ENCODE measurements at regions of chr11 and their contacts with region 1.

Region 1: DNA sequence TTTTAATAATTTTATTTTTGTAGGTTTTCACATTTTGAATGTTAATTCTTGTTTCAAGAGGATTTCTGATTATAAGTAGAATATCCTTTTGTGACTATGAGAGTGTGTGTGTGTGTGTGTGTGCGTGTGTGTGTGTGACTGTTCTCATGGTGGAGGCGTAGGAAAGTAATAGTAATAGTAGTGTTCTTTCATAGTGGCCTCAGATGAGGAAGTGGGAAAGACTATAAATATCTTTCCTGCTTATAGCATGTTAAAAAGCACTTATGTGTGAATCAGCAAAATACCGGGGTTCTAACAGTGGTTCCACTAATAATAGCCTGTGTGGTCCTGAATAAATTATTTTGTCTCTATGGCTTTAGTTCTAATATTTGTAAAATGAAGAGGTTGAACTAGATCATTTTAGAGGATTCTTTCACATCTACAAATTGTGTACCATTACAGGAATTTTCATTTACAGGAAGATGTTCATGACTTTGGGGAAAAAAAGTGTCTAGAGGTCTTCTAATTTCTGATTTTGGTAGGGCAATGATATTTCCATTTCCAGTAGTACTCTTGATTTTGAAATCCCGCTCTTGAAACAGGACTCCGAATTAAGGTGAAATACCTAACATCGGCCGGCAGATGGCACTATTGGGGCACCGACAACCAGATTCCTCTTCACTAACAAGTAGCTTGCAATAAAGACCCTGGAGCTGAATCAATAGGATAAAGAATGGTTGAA is 29.9 kb upstream of the OR10G7 start:
- DNase-seq: peak; percentile 74 to 77
- H3K4me3 ChIP-seq: no peak overlapping the region
- H3K27ac ChIP-seq: no peak overlapping the region
- H3K4me1 ChIP-seq: peaks cover 0 to 3% (median 2%) of the 10 kb centered on the region in 4 experiments; a peak in 3 of 7 replicates
- H3K27me3 ChIP-seq: no peaks in the 10 kb centered on the region
- CTCF ChIP-seq: peak; percentile 35 to 72 (median 65)
- EP300 ChIP-seq: no peak
- POLR2A ChIP-seq: no peak
- RAD21 ChIP-seq: peak; percentile 80 to 85

Region 2: DNA sequence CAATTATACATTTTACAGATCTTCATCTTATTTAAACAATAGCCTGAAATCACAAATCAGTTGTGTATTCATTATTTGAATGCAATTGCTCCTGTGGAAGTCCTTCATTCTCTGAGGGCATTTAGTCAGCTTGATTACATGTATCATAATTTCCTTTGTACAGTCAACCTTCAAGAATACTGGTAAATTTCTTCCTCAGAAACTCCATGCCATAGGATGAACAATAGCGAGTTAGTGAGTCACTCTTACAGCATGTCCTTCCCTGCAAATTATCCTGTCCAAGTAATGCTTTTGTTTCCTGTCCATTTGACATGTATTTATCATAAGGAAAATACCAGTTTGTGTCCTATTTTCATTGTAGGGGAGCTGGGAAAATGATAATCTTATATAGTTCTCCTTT is 97.3 kb before region 1 on chr11:
- CTCF ChIA-PET with region 1: no interaction called
- POLR2A ChIA-PET with region 1: no interaction called
- DNase-seq: no peak
- H3K4me3 ChIP-seq: no peak overlapping the region
- H3K27ac ChIP-seq: no peak overlapping the region
- H3K4me1 ChIP-seq: no peaks in the 10 kb centered on the region
- H3K27me3 ChIP-seq: no peaks in the 10 kb centered on the region
- CTCF ChIP-seq: no peak
- EP300 ChIP-seq: no peak
- POLR2A ChIP-seq: no peak
- RAD21 ChIP-seq: no peak

Region 3: GRCh38 chr11:124114942-124115781 is 44.1 kb after region 1 on chr11 and contains the start of gene VWA5A:
- CTCF ChIA-PET with region 1: interaction called, 13 read pairs
- POLR2A ChIA-PET with region 1: interaction called, 4 read pairs
- DNase-seq: peak; percentile 57 to 70
- H3K4me3 ChIP-seq: peak within 1 kb of the TSS; percentile 55 to 70 (median 63)
- H3K27ac ChIP-seq: no peak within 1 kb of the TSS
- H3K4me1 ChIP-seq: peaks cover 0 to 8% (median 4%) of the 10 kb centered on the region in 4 experiments; a peak in 4 of 7 replicates
- H3K27me3 ChIP-seq: no peaks in the 10 kb centered on the region
- CTCF ChIP-seq: no peak
- EP300 ChIP-seq: no peak
- POLR2A ChIP-seq: peak; percentile 48 to 81
- RAD21 ChIP-seq: peak in 1 of 2 experiments; percentile 15; a peak in 1 of 4 replicates
- total RNA-seq, gene VWA5A: 18.8 and 20.4 TPM in 2 replicates

Region 4: DNA sequence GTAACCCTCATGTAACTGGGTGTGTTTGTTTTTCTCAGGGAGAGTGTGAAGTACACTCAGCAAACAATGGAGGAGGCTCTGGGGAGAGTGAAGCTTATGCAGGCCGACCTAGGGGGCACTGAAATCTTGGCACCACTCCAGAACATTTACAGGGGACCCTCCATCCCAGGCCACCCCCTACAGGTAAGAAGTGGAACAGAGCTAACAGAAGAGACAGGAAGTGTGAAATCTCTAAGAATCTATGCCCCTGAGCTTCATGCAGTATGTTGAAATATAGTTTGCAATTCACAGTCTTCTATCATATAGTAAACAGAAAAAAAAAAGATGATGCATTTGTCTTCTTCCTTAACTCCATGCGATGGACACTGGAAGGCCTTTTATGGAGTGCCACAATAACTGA is 52.5 kb after region 1 on chr11:
- CTCF ChIA-PET with region 1: interaction called, 13 read pairs
- POLR2A ChIA-PET with region 1: no interaction called
- DNase-seq: no peak
- H3K4me3 ChIP-seq: no peak overlapping the region
- H3K27ac ChIP-seq: no peak overlapping the region
- H3K4me1 ChIP-seq: no peaks in the 10 kb centered on the region
- H3K27me3 ChIP-seq: no peaks in the 10 kb centered on the region
- CTCF ChIP-seq: peak; percentile 20 to 61 (median 60)
- EP300 ChIP-seq: no peak
- POLR2A ChIP-seq: no peak
- RAD21 ChIP-seq: peak; percentile 47 to 55

Region 5: GRCh38 chr11:124194698-124195410 is 123.8 kb after region 1 on chr11:
- CTCF ChIA-PET with region 1: interaction called, 39 read pairs
- POLR2A ChIA-PET with region 1: no interaction called
- DNase-seq: peak in 1 of 2 experiments; percentile 67
- H3K4me3 ChIP-seq: no peak overlapping the region
- H3K27ac ChIP-seq: no peak overlapping the region
- H3K4me1 ChIP-seq: peaks cover 0 to 3% (median 0%) of the 10 kb centered on the region in 4 experiments; a peak in 1 of 7 replicates
- H3K27me3 ChIP-seq: peaks cover 1 to 15% (median 11%) of the 10 kb centered on the region in 4 experiments; a peak in 5 of 7 replicates
- CTCF ChIP-seq: peak; percentile 59 to 91 (median 74)
- EP300 ChIP-seq: no peak
- POLR2A ChIP-seq: no peak
- RAD21 ChIP-seq: peak; percentile 76 to 84

Region 6: DNA sequence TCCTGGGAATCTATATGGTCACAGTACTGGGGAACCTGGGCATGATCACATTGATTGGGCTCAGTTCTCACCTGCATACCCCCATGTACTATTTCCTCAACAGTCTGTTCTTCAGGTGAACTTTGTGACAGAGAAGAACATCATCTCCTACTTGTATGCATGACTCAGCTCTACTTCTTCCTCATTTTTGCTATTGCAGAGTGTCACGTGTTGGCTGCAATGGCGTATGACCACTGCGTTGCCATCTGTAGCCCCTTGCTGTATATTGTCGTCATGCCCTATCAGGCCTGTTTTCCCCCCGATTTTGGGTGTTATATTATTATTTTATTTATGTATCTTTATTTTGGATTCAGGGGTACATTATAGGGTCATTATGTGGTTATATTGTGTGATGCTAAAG is 167.4 kb after region 1 on chr11:
- CTCF ChIA-PET with region 1: no interaction called
- POLR2A ChIA-PET with region 1: no interaction called
- DNase-seq: no peak
- H3K4me3 ChIP-seq: no peak overlapping the region
- H3K27ac ChIP-seq: no peak overlapping the region
- H3K4me1 ChIP-seq: no peaks in the 10 kb centered on the region
- H3K27me3 ChIP-seq: no peaks in the 10 kb centered on the region
- CTCF ChIP-seq: no peak
- EP300 ChIP-seq: no peak
- POLR2A ChIP-seq: no peak
- RAD21 ChIP-seq: no peak

Region 7: GRCh38 chr11:124277804-124278203 is 206.7 kb after region 1 on chr11:
- CTCF ChIA-PET with region 1: interaction called, 13 read pairs
- POLR2A ChIA-PET with region 1: no interaction called
- DNase-seq: peak in 1 of 2 experiments; percentile 48
- H3K4me3 ChIP-seq: no peak overlapping the region
- H3K27ac ChIP-seq: no peak overlapping the region
- H3K4me1 ChIP-seq: peaks cover 0 to 3% (median 0%) of the 10 kb centered on the region in 4 experiments; a peak in 1 of 7 replicates
- H3K27me3 ChIP-seq: no peaks in the 10 kb centered on the region
- CTCF ChIP-seq: peak in 2 of 3 experiments; percentile 49 to 57; a peak in 3 of 4 replicates
- EP300 ChIP-seq: no peak
- POLR2A ChIP-seq: no peak
- RAD21 ChIP-seq: peak; percentile 63 to 66

Measured in H1 (cell line).